GM12878 (cell line): ENCODE measurements at regions of chr7 and their contacts with region 1.

Region 1: GRCh38 chr7:139708541-139708940 is 69.3 kb downstream of the HIPK2 start:
- DNase-seq: peak; percentile 58
- ATAC-seq: peak; percentile 75
- H3K4me3 ChIP-seq: no peak overlapping the region
- H3K27ac ChIP-seq: no peak overlapping the region
- H3K4me1 ChIP-seq: peaks cover 18% of the 10 kb centered on the region
- H3K27me3 ChIP-seq: no peaks in the 10 kb centered on the region
- CTCF ChIP-seq: no peak
- EP300 ChIP-seq: no peak
- POLR2A ChIP-seq: no peak
- RAD21 ChIP-seq: peak; percentile 30; the same call in 1 of the 2 replicates

Region 2: DNA sequence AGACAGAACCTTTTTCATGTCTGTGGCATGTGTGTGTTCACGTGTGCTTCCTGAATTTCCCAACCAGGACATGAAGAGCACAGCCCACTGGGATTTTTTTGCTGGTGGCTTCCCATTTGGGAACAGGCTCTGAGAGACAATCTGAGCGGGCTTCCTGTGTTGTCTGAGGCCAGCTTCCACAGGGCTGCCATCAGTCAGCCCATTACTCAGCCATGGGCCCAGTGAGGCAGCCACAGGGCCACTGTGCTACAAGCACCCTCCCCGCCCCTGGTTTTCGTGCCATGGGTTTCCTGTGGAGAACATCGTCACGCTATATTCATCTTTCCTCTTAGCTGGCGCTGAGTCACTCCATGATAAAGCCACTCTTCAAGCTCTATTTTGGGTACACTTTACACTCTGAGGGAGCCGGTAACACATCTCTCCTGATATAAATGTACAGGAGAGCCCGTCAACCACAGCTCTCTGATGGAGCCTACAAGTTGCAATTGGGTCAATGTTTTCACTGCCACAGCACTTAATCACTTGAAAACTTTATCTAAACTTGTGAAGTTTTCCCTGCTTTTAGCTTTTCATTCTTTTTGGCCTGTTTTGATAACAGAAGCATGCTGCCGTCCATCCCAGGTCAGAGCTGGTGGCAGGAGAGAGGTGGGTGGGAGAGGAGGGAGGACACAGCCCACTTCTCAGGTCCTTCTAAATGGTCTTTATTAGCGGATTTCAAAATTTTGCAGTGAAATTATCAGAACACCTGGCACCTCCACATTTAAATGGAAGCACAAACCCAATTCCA is 27.7 kb before region 1 on chr7:
- CTCF ChIA-PET with region 1: interaction called, 3 read pairs
- POLR2A ChIA-PET with region 1: no interaction called
- RAD21 ChIA-PET with region 1: interaction called, 11 read pairs
- SMC1A ChIA-PET with region 1: interaction called, 4 read pairs
- in situ Hi-C with region 1: no loop called
- intact Hi-C with region 1: loop called (anchors 2 kb)
- DNase-seq: no peak
- ATAC-seq: peak; percentile 64
- H3K4me3 ChIP-seq: no peak overlapping the region
- H3K27ac ChIP-seq: peak overlapping the region; percentile 58; the same call in 1 of the 2 replicates
- H3K4me1 ChIP-seq: peaks cover 37% of the 10 kb centered on the region
- H3K27me3 ChIP-seq: no peaks in the 10 kb centered on the region
- CTCF ChIP-seq: no peak
- EP300 ChIP-seq: peak in 1 of 2 experiments; percentile 35; a peak in 1 of 4 replicates
- POLR2A ChIP-seq: no peak
- RAD21 ChIP-seq: no peak